ENCODE measurements at regions of chr15 and their contacts with region 1.

Region 1: GRCh38 chr15:45429974-45430792 is 51.8 kb upstream of the GATM start:
- DNase-seq: peak; percentile 46
- ATAC-seq: peak; percentile 95
- H3K4me3 ChIP-seq: peak overlapping the region; percentile 60
- H3K27ac ChIP-seq: no peak overlapping the region
- H3K4me1 ChIP-seq: no peaks in the 10 kb centered on the region
- H3K27me3 ChIP-seq: peaks cover 2% of the 10 kb centered on the region; the same call in 1 of the 2 replicates
- CTCF ChIP-seq: peak; percentile 100; the same call in 1 of the 2 replicates
- POLR2A ChIP-seq: 0 out of 2 replicates have a peak, but pooled peaks have one; percentile 24
- RAD21 ChIP-seq: peak; percentile 95

Region 2: DNA sequence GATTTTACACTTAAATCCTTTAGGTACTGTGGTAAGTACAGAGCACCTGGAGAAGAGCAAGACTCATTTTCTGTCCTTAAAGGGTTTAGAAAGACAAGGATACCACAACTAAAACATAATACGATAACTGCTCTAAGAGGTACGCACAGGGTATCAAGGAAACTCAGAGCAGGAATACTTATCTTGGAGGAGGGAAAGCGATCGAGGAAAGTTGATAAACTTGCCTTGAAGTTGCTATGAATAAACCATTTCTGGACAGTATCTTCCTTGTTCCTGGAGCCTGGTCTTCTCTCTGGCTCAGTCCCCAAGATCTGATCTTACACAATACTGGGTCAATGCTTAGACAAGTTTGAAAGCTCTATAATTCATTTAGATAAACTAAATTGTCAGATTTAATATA is 34.2 kb before region 1 on chr15:
- CTCF ChIA-PET with region 1: no interaction called
- POLR2A ChIA-PET with region 1: no interaction called
- dilution Hi-C with region 1: no loop called
- in situ Hi-C with region 1: no loop called
- intact Hi-C with region 1: loop called (anchors 1 kb)
- DNase-seq: no peak
- ATAC-seq: no peak
- H3K4me3 ChIP-seq: no peak overlapping the region
- H3K27ac ChIP-seq: no peak overlapping the region
- H3K4me1 ChIP-seq: no peaks in the 10 kb centered on the region
- H3K27me3 ChIP-seq: peaks cover 13% of the 10 kb centered on the region
- CTCF ChIP-seq: no peak
- POLR2A ChIP-seq: no peak
- RAD21 ChIP-seq: no peak